ENCODE measurements at regions of chr7 and their contacts with region 1.

Region 1: DNA sequence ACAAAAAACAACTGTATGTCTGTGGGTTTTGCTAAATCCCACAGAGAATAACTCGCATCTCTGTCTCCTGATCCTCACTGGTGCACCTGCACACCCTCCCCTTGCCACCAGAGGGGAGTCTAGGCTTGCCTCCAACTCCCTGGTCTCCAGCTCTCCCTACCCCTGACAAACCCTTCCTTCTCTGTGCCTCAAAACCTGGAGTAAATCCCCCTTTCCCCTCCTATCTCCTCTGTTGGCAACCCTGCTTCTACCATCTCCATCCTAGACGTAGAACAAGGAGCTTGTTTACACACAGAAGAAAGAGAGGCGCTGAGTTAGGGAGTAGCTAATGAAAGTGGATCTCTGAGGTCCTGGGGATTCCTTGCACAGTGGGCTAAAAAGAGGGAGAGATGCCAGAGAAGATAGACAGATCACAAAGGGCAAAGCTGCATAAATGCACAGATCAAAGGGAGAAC is 6.0 kb downstream of the MBLAC1 start:
- DNase-seq: peak; percentile 62
- ATAC-seq: peak; percentile 76

Region 2: GRCh38 chr7:100053215-100053614 is 79.5 kb before region 1 on chr7:
- intact Hi-C with region 1: no loop called
- DNase-seq: no peak
- ATAC-seq: peak; percentile 24

Region 3: DNA sequence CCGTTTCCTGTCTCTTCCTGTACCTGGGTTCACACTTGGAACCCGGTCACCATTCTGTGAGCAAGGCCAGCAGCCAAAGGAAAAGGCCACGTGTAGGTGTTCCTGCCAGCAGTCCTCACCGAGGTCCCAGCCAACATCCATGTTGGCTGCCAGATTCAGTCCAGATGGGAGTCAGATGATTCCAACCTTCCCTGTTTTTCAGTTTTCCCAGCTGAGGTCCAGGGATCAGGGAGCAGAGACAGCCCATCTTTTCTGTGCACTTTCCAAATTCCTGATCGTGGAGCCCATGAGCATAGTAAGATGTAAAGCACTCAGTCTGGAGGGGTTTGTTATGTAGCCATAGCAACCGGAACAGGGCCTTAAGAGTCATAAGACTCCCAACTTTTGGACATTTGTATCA is 83.2 kb after region 1 on chr7:
- intact Hi-C with region 1: loop called (anchors 10 kb)
- DNase-seq: peak; percentile 58
- ATAC-seq: peak; percentile 80